ENCODE measurements at regions of chr1 and their contacts with region 1.

Region 1: DNA sequence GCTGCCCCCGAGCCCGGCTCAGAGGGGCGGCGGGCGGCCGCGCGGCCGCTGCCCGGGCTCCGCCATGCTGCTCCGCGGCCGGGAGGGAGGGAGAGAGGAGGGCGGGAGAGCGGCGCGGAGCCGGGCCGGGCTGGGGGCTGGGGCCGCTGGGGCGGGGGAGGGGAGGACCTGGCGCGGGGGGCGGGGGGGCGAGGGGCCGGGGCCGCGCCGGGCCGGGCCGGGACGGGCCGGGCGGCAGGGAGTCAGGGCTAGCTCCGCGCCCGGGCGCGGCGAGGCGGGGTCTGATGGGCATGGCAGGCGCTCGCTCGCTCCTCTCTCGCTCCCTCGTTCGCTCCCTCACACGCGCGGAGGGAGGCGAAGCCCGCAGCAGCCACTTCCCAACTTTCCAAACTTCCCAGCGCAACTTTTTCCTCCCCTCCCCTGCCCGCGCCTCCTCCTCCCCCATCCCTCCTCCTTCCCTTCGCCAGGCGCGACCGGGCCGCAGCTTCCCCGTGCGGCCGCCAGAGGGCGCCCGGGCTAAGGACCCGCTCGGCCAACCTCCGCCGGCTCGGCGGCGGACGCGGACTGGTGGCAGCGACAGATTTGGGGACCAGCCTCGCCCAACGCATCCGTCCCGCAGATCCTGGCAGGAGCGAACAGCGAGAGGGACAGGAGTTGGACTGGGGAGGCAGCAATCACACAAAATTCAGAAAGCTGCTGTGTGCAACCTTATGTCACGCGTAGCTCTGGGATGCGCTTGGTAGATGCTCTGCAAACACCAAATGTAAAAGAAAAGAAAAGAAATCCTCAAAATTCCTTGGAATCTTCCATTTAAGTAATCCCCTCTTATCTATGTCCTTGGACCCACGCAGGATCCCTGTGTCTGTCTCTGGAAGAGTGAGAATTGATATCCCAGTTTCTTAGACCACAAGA is at the start of gene TRABD2B:
- DNase-seq: peak; percentile 85
- ATAC-seq: peak; percentile 74 to 81
- total RNA-seq, gene TRABD2B: 6.2 to 7.6 TPM

Region 2: GRCh38 chr1:47785561-47786271 is 211.8 kb before region 1 on chr1:
- intact Hi-C with region 1: loop called in 1 of 2 experiments (anchors 10 kb)
- DNase-seq: peak; percentile 52
- ATAC-seq: peak; percentile 74 to 92

Measured in left cardiac atrium (tissue), 4 donors.